ENCODE measurements at regions of chr7 and their contacts with region 1.

Region 1: DNA sequence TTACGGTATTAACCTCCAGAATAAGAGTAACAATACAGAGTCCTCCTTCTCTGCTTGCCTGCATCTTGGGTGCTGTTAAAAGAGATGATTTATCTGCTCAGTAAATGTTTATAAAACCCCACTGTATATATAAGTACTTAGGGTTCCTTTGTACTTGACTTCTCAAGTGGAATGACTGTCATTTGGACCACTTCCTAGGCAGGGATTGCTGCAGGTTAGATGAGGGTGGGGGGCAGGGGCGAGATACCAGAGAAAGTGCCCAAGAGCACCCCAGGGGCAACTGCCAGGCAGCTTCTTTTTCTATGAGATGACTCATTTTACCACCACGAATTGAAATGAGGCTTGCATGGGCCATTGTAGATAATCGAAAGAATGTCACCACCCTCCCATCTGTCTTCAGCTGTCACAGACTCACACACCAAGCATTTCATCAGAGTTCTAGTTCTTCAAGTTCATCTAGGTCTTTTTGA is 421.9 kb upstream of the GALNT17 start:
- DNase-seq: no peak
- ATAC-seq: no peak
- H3K4me3 ChIP-seq: no peak overlapping the region
- H3K4me3 Mint-ChIP-seq: no peak overlapping the region
- H3K27ac ChIP-seq: no peak overlapping the region
- H3K27ac Mint-ChIP-seq: no peak overlapping the region
- H3K4me1 ChIP-seq: peaks cover 4 to 6% of the 10 kb centered on the region in 2 experiments
- H3K4me1 Mint-ChIP-seq: peaks cover 0 to 15% (median 11%) of the 10 kb centered on the region in 3 donors
- H3K27me3 ChIP-seq: no peaks in the 10 kb centered on the region
- H3K27me3 Mint-ChIP-seq: no peaks in the 10 kb centered on the region

Region 2: GRCh38 chr7:70741666-70742065 is 31.6 kb after region 1 on chr7:
- CTCF ChIA-PET with region 1: interaction called in 1 of 2 experiments, 3 read pairs
- POLR2A ChIA-PET with region 1: interaction called in 1 of 2 experiments, 11 read pairs
- DNase-seq: no peak
- ATAC-seq: no peak
- H3K4me3 ChIP-seq: no peak overlapping the region
- H3K4me3 Mint-ChIP-seq: no peak overlapping the region
- H3K27ac ChIP-seq: no peak overlapping the region
- H3K27ac Mint-ChIP-seq: no peak overlapping the region
- H3K4me1 ChIP-seq: peaks cover 2% of the 10 kb centered on the region in 2 experiments
- H3K4me1 Mint-ChIP-seq: peaks cover 10 to 23% (median 20%) of the 10 kb centered on the region in 3 donors
- H3K27me3 ChIP-seq: no peaks in the 10 kb centered on the region
- H3K27me3 Mint-ChIP-seq: no peaks in the 10 kb centered on the region

Measured in T-cell (primary cell).